ENCODE measurements at regions of chr7 and their contacts with region 1.

Region 1: DNA sequence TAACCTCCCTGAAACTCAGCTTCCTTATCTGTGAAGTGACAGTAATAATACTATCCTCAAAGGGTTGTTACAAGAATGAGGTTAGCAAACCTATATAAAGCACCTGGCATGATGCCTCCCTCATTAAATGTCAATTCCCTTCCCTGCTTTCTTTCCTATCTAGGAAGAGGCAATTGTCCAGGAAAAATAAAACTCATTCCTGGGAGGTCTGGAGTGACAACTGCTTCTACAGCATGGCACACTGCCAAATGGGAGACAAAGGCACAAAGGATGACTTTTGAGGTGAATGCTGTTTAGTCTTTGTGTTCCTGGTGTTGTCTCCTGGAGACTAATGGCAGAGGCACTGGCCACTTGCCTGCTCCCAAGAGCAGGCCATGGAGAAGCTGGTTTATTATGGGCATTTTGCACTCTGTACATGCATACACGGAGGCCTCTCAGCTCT is 32.2 kb upstream of the PDE1C start:
- DNase-seq: no peak
- ATAC-seq: peak; percentile 87

Region 2: GRCh38 chr7:31051598-31052486 is 1050.6 kb before region 1 on chr7 and contains the start of gene ADCYAP1R1:
- intact Hi-C with region 1: no loop called
- DNase-seq: no peak
- ATAC-seq: peak; percentile 90
- total RNA-seq, gene ADCYAP1R1: 5.8 TPM

Region 3: GRCh38 chr7:32070406-32071360 is 31.8 kb before region 1 on chr7 and contains the start of gene PDE1C:
- intact Hi-C with region 1: loop called (anchors 2 kb)
- DNase-seq: peak; percentile 81
- ATAC-seq: peak; percentile 90
- total RNA-seq, gene PDE1C: 198 TPM

Region 4: GRCh38 chr7:32079510-32079909 is 22.9 kb before region 1 on chr7:
- intact Hi-C with region 1: loop called (anchors 2 kb)
- DNase-seq: no peak
- ATAC-seq: peak; percentile 93

Measured in Right ventricle myocardium inferior (tissue), 1 donor.